ENCODE measurements at regions of chr10 and their contacts with region 1.

Region 1: DNA sequence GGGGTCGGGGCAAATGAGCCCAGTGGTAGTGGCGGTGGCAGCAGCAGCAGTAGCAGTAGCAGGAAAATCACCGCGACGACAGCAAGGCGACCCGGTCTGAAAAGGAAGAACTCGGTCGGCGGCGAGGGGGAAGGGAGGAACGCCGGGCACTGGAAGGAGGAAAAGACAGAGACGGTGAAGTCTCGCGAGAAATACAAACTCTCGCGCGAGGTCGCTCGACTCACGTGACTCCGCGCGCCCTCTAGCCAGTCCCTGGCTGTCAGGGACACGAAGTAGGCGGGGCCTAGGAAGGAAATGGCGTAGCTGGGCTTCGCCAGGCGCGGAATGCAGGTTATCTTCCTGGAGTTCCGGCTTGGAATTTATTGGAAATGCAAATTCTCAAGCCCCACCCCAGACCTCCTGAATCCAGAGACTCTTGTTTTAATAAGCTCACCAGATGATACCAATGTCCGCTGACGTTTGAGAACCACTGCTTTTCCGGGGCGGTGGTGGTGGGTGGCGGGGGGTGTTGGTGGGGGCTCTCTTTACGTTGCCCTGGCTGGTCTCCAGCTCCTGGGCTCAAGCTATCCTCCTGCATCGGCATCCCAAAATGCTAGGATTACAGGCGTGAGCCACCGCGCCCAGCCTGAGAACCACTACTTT is at the start of gene SMNDC1:
- DNase-seq: peak; percentile 98 to 99
- ATAC-seq: peak; percentile 99
- H3K4me3 ChIP-seq: peak within 1 kb of the TSS; percentile 93 to 99
- H3K27ac ChIP-seq: peak within 1 kb of the TSS; percentile 89 to 96
- H3K4me1 ChIP-seq: peaks cover 3 to 5% of the 10 kb centered on the region in 2 donors
- H3K27me3 ChIP-seq: no peaks in the 10 kb centered on the region
- total RNA-seq, gene SMNDC1: 31.9 to 34.2 TPM

Region 2: GRCh38 chr10:110497438-110498086 is 192.7 kb after region 1 on chr10 and contains the start of gene DUSP5:
- intact Hi-C with region 1: loop called (anchors 2 to 5 kb)
- DNase-seq: peak; percentile 96 to 97
- ATAC-seq: peak; percentile 96
- H3K4me3 ChIP-seq: peak within 1 kb of the TSS; percentile 38 to 80
- H3K27ac ChIP-seq: peak within 1 kb of the TSS in 1 of 2 donors; percentile 58
- H3K4me1 ChIP-seq: no peaks in the 10 kb centered on the region
- H3K27me3 ChIP-seq: peaks cover 0 to 2% of the 10 kb centered on the region in 2 donors
- total RNA-seq, gene DUSP5: 10.4 to 30.3 TPM